Endothelial cell of umbilical vein (primary cell): ENCODE measurements at regions of chr20 and their contacts with region 1.

Region 1: GRCh38 chr20:50929299-50930138 is 1.7 kb downstream of the ADNP start:
- DNase-seq: peak; percentile 92
- H3K4me3 ChIP-seq: peak overlapping the region; percentile 63 to 100 (median 90)
- H3K27ac ChIP-seq: peak overlapping the region; percentile 50
- H3K4me1 ChIP-seq: peaks cover 22% of the 10 kb centered on the region
- H3K27me3 ChIP-seq: no peaks in the 10 kb centered on the region
- CTCF ChIP-seq: peak; percentile 95 to 98
- POLR2A ChIP-seq: peak; percentile 15

Region 2: GRCh38 chr20:50815162-50815989 is 114.1 kb before region 1 on chr20:
- CTCF ChIA-PET with region 1: interaction called, 26 read pairs
- POLR2A ChIA-PET with region 1: interaction called, 3 read pairs
- dilution Hi-C with region 1: no loop called
- intact Hi-C with region 1: loop called (anchors 1 kb)
- DNase-seq: no peak
- H3K4me3 ChIP-seq: no peak overlapping the region
- H3K27ac ChIP-seq: no peak overlapping the region
- H3K4me1 ChIP-seq: no peaks in the 10 kb centered on the region
- H3K27me3 ChIP-seq: no peaks in the 10 kb centered on the region
- CTCF ChIP-seq: no peak
- POLR2A ChIP-seq: no peak

Region 3: GRCh38 chr20:50913690-50914375 is 15.7 kb before region 1 on chr20:
- CTCF ChIA-PET with region 1: interaction called, 57 read pairs
- POLR2A ChIA-PET with region 1: interaction called, 7 read pairs
- dilution Hi-C with region 1: no loop called
- intact Hi-C with region 1: loop called (anchors 1 kb)
- DNase-seq: peak; percentile 63
- H3K4me3 ChIP-seq: no peak overlapping the region
- H3K27ac ChIP-seq: peak overlapping the region; percentile 32
- H3K4me1 ChIP-seq: peaks cover 39% of the 10 kb centered on the region
- H3K27me3 ChIP-seq: no peaks in the 10 kb centered on the region
- CTCF ChIP-seq: no peak
- POLR2A ChIP-seq: no peak

Region 4: DNA sequence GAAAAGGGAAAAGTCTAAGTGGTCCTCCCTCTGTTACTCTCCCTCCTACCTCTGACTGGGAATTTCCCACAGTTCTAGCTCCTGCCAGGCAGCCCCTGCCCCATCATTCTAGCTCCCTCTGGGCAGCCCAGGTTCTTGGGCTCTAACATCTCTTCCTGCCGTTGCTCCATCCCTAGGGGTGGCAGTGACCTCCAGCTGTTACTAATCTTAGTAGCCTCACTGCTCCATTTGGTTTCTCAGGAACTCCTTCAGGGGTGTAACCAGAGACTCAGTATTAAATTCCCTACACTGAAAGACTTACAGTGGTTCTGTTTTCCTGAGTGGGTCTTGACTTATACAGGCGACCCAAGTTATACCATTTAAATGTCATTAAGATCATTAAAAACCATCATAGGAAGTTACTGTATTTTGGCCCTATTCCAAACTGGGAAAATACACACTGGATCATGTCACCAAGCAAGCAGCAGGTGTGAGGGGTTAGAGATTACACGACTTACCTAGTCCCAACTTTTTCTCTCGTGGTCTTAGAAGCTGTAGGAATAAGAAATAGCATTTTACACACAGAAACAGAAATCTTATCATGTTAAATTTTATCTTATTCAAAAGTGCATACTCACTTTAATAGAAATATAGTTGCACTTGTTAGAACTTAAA is 18.7 kb after region 1 on chr20:
- CTCF ChIA-PET with region 1: no interaction called
- POLR2A ChIA-PET with region 1: no interaction called
- dilution Hi-C with region 1: no loop called
- intact Hi-C with region 1: no loop called
- DNase-seq: no peak
- H3K4me3 ChIP-seq: no peak overlapping the region
- H3K27ac ChIP-seq: no peak overlapping the region
- H3K4me1 ChIP-seq: no peaks in the 10 kb centered on the region
- H3K27me3 ChIP-seq: no peaks in the 10 kb centered on the region
- CTCF ChIP-seq: no peak
- POLR2A ChIP-seq: no peak

Region 5: GRCh38 chr20:50958615-50959542 is 29.4 kb after region 1 on chr20 and contains the start of gene MOCS3:
- CTCF ChIA-PET with region 1: interaction called, 13 read pairs
- POLR2A ChIA-PET with region 1: interaction called, 15 read pairs
- dilution Hi-C with region 1: no loop called
- intact Hi-C with region 1: loop called (anchors 1 kb)
- DNase-seq: peak; percentile 94
- H3K4me3 ChIP-seq: peak within 1 kb of the TSS; percentile 55 to 94 (median 80)
- H3K27ac ChIP-seq: peak within 1 kb of the TSS; percentile 96
- H3K4me1 ChIP-seq: peaks cover 24% of the 10 kb centered on the region
- H3K27me3 ChIP-seq: no peaks in the 10 kb centered on the region
- CTCF ChIP-seq: no peak
- POLR2A ChIP-seq: no peak
- total RNA-seq, gene MOCS3: 3.6 and 4.2 TPM in 2 replicates